MCF 10A (cell line): ENCODE measurements at regions of chr13 and their contacts with region 1.

Region 1: GRCh38 chr13:51590971-51591627 is 6.8 kb downstream of the WDFY2 start:
- DNase-seq: peak; percentile 91
- H3K4me3 Mint-ChIP-seq: peak overlapping the region; percentile 61
- H3K27ac Mint-ChIP-seq: peak overlapping the region; percentile 77
- H3K4me1 Mint-ChIP-seq: peaks cover 59% of the 10 kb centered on the region
- H3K27me3 Mint-ChIP-seq: no peaks in the 10 kb centered on the region
- CTCF ChIP-seq: no peak

Region 2: GRCh38 chr13:51632591-51633362 is 41.7 kb after region 1 on chr13:
- CTCF ChIA-PET with region 1: interaction called, 3 read pairs
- POLR2A ChIA-PET with region 1: interaction called, 31 read pairs
- intact Hi-C with region 1: no loop called
- DNase-seq: no peak
- H3K4me3 Mint-ChIP-seq: peak overlapping the region; percentile 66
- H3K27ac Mint-ChIP-seq: peak overlapping the region; percentile 97
- H3K4me1 Mint-ChIP-seq: peaks cover 50% of the 10 kb centered on the region
- H3K27me3 Mint-ChIP-seq: no peaks in the 10 kb centered on the region
- CTCF ChIP-seq: no peak

Region 3: DNA sequence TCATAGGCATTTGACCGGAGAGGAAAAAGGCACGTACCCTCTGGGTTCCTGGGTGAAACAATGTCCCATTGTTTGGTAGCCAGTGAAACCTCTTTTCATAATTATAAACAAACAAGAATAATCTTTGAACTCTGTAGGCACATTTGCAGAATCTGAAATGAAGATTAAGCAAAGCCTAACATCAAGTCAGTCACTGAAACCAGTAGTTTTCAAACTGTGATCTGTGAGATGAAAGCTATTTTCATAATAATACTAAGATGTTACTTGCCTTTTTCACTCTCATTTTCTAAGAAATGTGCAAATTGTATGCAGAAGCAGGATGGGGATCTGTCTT is 98.5 kb after region 1 on chr13:
- CTCF ChIA-PET with region 1: no interaction called
- POLR2A ChIA-PET with region 1: no interaction called
- intact Hi-C with region 1: no loop called
- DNase-seq: no peak
- H3K4me3 Mint-ChIP-seq: no peak overlapping the region
- H3K27ac Mint-ChIP-seq: no peak overlapping the region
- H3K4me1 Mint-ChIP-seq: peaks cover 23% of the 10 kb centered on the region
- H3K27me3 Mint-ChIP-seq: no peaks in the 10 kb centered on the region
- CTCF ChIP-seq: no peak